Left ventricle myocardium inferior (tissue), 1 donor: ENCODE measurements at regions of chr17 and their contacts with region 1.

Region 1: DNA sequence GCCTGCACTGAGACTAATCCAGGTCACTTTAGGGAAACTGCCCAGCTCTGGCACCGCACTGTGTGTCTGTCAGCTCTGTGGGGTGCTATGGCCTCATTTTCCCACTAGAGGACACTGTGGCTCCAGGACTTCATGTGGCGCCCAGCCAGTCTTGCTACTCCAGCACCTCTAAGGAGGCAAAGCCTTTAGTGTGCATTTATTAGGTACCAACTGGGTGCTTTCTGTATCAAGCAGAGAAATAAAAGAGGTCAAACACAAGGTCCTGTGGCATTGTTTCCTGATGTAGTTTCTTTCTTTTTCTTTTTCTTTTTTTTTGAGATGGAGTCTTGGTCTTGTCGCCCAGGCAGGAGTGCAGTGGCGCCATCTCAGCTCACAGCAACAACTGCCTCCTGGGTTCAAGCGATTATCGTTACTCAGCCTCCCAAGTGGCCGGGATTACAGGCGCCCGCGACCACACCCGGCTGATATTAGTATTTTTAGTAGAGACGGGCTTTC is 12.5 kb upstream of the RHBDL3 start:
- DNase-seq: peak; percentile 76
- H3K4me3 ChIP-seq: no peak overlapping the region
- H3K27ac ChIP-seq: no peak overlapping the region
- H3K4me1 ChIP-seq: no peaks in the 10 kb centered on the region
- H3K27me3 ChIP-seq: peaks cover 4% of the 10 kb centered on the region
- CTCF ChIP-seq: peak; percentile 100

Region 2: GRCh38 chr17:32319548-32319905 is 66.4 kb after region 1 on chr17:
- intact Hi-C with region 1: loop called (anchors 5 kb)
- DNase-seq: peak; percentile 78
- H3K4me3 ChIP-seq: no peak overlapping the region
- H3K27ac ChIP-seq: no peak overlapping the region
- H3K4me1 ChIP-seq: peaks cover 3% of the 10 kb centered on the region
- H3K27me3 ChIP-seq: peaks cover 18% of the 10 kb centered on the region
- CTCF ChIP-seq: peak; percentile 96